ENCODE measurements at regions of chr1 and their contacts with region 1.

Region 1: DNA sequence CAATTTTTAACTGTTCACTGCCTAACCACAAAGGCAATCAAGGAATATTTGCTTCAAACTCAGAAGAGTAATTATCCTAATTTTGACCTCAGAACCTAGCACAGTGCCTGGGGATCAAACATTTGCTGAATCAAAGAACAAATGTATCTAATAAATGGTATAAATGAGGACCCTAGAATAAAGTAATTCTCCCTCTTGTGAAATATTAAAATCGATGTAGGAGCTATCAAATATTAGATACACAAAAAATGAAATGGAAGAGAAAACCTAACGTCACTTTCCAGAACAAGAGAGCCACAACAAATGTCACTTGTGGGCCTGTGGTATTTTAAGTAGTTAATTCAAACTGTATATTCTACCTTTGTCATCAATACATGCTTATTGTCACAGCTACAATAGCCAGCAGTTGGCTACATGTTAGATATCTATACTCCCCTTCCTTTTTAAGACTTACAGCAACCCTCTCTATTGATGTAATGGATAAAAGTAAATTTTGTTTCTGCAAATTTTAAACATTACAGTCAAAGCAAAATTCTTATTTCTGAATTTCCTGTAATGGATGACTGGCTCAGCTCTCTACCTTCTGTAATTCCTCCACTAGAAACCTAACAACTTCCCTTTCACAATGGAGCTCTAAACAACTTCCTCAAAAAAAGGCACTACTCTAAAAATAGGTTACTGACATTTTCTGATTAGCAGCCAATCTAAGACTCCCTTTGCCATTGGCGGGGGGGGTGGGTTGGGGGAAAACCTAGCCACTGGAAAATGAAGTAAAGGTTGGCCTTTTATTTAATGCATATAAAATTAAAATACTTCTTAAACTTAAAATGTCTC is 37.6 kb downstream of the PUM1 start:
- DNase-seq: no peak
- ATAC-seq: peak; percentile 70
- H3K4me3 Mint-ChIP-seq: peak overlapping the region; percentile 45
- H3K27ac Mint-ChIP-seq: peak overlapping the region; percentile 13
- H3K4me1 Mint-ChIP-seq: peaks cover 74% of the 10 kb centered on the region
- H3K27me3 Mint-ChIP-seq: no peaks in the 10 kb centered on the region
- CTCF ChIP-seq: no peak

Region 2: GRCh38 chr1:30847358-30847972 is 180.4 kb before region 1 on chr1:
- CTCF ChIA-PET with region 1: no interaction called
- POLR2A ChIA-PET with region 1: no interaction called
- intact Hi-C with region 1: no loop called
- DNase-seq: no peak
- ATAC-seq: no peak
- H3K4me3 Mint-ChIP-seq: no peak overlapping the region
- H3K27ac Mint-ChIP-seq: no peak overlapping the region
- H3K4me1 Mint-ChIP-seq: no peaks in the 10 kb centered on the region
- H3K27me3 Mint-ChIP-seq: peaks cover 57% of the 10 kb centered on the region
- CTCF ChIP-seq: no peak

Region 3: GRCh38 chr1:31054349-31054748 is 26.4 kb after region 1 on chr1:
- CTCF ChIA-PET with region 1: no interaction called
- POLR2A ChIA-PET with region 1: interaction called, 13 read pairs
- intact Hi-C with region 1: no loop called
- DNase-seq: no peak
- ATAC-seq: peak; percentile 20
- H3K4me3 Mint-ChIP-seq: no peak overlapping the region
- H3K27ac Mint-ChIP-seq: peak overlapping the region; percentile 18
- H3K4me1 Mint-ChIP-seq: peaks cover 55% of the 10 kb centered on the region
- H3K27me3 Mint-ChIP-seq: no peaks in the 10 kb centered on the region
- CTCF ChIP-seq: no peak

Region 4: DNA sequence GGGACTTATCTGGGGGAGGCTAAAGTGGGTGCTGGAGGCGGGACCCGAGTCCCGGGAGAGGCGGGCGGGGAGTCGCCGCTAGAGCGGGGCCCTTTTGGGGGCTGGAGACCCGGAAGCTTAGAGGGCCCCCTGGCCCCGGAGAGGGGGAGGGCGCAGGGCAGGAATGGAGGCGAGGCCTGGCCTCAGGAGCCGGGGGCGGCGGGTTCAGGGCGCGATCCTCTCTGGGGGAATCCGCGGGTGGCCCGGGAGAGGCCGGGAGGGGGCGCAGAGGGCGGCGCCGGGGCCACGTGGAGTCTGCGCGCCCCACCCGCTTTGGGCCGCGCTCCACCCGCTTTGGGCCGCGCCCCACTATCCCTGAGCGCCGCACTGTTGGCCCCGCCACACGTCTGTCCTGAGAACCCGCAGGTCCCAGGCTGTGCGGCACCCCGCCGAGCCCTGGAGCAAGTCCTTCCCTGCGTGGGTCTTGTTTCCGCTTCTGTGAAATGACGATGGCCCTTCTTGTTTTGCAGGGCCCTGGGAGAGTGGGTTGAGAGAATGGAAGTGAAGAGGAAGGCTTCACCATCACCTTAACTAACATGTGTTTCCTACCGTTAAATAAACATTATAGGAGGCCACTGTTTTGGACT is 127.4 kb after region 1 on chr1:
- CTCF ChIA-PET with region 1: no interaction called
- POLR2A ChIA-PET with region 1: no interaction called
- intact Hi-C with region 1: no loop called
- DNase-seq: peak; percentile 70
- ATAC-seq: peak; percentile 77
- H3K4me3 Mint-ChIP-seq: peak overlapping the region; percentile 85
- H3K27ac Mint-ChIP-seq: peak overlapping the region; percentile 70
- H3K4me1 Mint-ChIP-seq: peaks cover 11% of the 10 kb centered on the region
- H3K27me3 Mint-ChIP-seq: no peaks in the 10 kb centered on the region
- CTCF ChIP-seq: no peak